PC-9 (cell line): ENCODE measurements at regions of chr13 and their contacts with region 1.

Region 1: GRCh38 chr13:110225609-110226562 is 81.1 kb downstream of the COL4A1 start:
- DNase-seq: peak in 1 of 2 experiments; percentile 94
- H3K4me3 ChIP-seq: no peak overlapping the region
- H3K27ac ChIP-seq: peak overlapping the region; percentile 60
- H3K4me1 ChIP-seq: peaks cover 29% of the 10 kb centered on the region
- H3K27me3 ChIP-seq: no peaks in the 10 kb centered on the region
- CTCF ChIP-seq: no peak

Region 2: DNA sequence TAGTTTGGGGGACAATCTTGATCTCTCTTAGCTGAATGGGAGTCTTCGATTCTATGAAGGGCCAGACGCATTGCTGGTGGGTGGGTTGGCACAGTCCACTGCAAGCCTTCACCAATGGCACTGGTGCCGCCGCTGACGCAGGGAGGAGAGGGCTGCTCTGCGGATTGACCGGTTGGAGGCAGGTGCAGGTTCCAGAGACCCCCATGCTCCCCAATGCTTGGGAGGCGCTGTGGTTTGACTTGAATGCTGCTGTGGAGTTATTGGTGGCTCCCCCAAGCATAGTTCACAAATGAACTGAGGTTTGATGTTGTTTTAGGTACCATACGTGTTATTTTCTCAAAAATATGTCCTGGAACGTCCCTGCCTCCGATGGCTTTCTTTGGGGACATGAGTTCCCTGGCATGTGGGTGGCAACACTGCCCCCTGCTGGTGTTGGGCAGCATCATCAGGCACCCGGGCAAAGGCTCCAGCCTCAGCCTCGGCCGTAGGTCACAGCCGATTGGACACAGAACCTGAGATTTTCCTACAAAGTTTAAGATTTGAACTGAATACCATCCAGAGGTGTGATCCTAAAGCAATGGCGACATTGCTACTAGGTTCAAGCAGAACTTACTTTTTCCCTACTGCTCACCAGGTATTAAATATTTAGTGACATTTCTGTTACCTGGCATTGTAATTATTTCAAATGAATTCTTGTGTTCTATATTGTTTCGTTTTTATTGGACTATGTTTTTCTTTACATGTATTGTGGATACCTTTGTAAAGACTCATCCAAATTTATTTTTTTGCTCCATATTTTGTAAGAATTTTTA is 593.5 kb after region 1 on chr13:
- CTCF ChIA-PET with region 1: no interaction called
- POLR2A ChIA-PET with region 1: no interaction called
- intact Hi-C with region 1: loop called (anchors 2 kb)
- DNase-seq: peak; percentile 62 to 72
- H3K4me3 ChIP-seq: no peak overlapping the region
- H3K27ac ChIP-seq: no peak overlapping the region
- H3K4me1 ChIP-seq: peaks cover 18% of the 10 kb centered on the region; the same call in 1 of the 2 replicates
- H3K27me3 ChIP-seq: no peaks in the 10 kb centered on the region
- CTCF ChIP-seq: peak; percentile 99

Region 3: GRCh38 chr13:110907951-110908898 is 682.3 kb after region 1 on chr13:
- CTCF ChIA-PET with region 1: no interaction called
- POLR2A ChIA-PET with region 1: no interaction called
- intact Hi-C with region 1: loop called (anchors 10 kb)
- DNase-seq: peak; percentile 82 to 100
- H3K4me3 ChIP-seq: no peak overlapping the region
- H3K27ac ChIP-seq: peak overlapping the region; percentile 91
- H3K4me1 ChIP-seq: peaks cover 51% of the 10 kb centered on the region
- H3K27me3 ChIP-seq: no peaks in the 10 kb centered on the region
- CTCF ChIP-seq: no peak; the same call in 1 of the 2 replicates